Activated T-helper 2 cell treated with anti-CD3 and anti-CD28 coated beads, Interferon-gamma antibody, Interleukin-2, Interleukin-4, amounts not matched to agents 10 μg/mL and 5 μg/mL and 100 μg/mL, durations not matched to agents 14 hours and 24 hours and 36 hours (primary cell): ENCODE measurements at regions of chr1 and their contacts with region 1.

Region 1: GRCh38 chr1:11059990-11060830 is at the start of gene SRM:
- DNase-seq: peak; percentile 91
- H3K4me3 Mint-ChIP-seq: peak within 1 kb of the TSS; percentile 97
- H3K27ac Mint-ChIP-seq: peak within 1 kb of the TSS; percentile 95
- H3K4me1 Mint-ChIP-seq: peaks cover 26% of the 10 kb centered on the region
- H3K27me3 Mint-ChIP-seq: no peaks in the 10 kb centered on the region
- total RNA-seq, gene SRM: 230 and 233 TPM in 2 replicates

Region 2: DNA sequence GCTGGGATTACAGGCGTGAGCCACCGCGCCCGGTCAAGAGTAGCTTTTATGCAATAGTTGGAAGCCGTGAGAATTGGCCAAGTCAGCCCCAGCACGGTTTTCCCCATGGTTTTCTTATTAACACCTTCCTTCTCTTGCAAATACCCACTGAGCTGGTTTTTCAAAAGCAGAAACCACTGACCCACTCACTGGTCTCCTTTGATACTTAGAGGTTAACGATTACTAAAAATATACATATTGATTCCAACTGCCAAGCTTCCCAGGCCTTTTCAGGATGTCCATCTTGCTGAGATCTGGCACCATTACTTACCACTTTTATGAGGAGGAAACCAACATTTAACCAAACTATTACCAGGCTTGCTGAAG is 73.7 kb before region 1 on chr1:
- intact Hi-C with region 1: no loop called
- DNase-seq: no peak
- H3K4me3 Mint-ChIP-seq: no peak overlapping the region
- H3K27ac Mint-ChIP-seq: no peak overlapping the region
- H3K4me1 Mint-ChIP-seq: peaks cover 14% of the 10 kb centered on the region
- H3K27me3 Mint-ChIP-seq: peaks cover 12% of the 10 kb centered on the region

Region 3: GRCh38 chr1:11012250-11013171 is 47.7 kb before region 1 on chr1 and contains the start of gene TARDBP:
- intact Hi-C with region 1: loop called (anchors 10 kb)
- DNase-seq: peak; percentile 89
- H3K4me3 Mint-ChIP-seq: peak within 1 kb of the TSS; percentile 94
- H3K27ac Mint-ChIP-seq: peak within 1 kb of the TSS; percentile 98
- H3K4me1 Mint-ChIP-seq: peaks cover 19% of the 10 kb centered on the region
- H3K27me3 Mint-ChIP-seq: no peaks in the 10 kb centered on the region
- total RNA-seq, gene TARDBP: 190 and 202 TPM in 2 replicates

Region 4: DNA sequence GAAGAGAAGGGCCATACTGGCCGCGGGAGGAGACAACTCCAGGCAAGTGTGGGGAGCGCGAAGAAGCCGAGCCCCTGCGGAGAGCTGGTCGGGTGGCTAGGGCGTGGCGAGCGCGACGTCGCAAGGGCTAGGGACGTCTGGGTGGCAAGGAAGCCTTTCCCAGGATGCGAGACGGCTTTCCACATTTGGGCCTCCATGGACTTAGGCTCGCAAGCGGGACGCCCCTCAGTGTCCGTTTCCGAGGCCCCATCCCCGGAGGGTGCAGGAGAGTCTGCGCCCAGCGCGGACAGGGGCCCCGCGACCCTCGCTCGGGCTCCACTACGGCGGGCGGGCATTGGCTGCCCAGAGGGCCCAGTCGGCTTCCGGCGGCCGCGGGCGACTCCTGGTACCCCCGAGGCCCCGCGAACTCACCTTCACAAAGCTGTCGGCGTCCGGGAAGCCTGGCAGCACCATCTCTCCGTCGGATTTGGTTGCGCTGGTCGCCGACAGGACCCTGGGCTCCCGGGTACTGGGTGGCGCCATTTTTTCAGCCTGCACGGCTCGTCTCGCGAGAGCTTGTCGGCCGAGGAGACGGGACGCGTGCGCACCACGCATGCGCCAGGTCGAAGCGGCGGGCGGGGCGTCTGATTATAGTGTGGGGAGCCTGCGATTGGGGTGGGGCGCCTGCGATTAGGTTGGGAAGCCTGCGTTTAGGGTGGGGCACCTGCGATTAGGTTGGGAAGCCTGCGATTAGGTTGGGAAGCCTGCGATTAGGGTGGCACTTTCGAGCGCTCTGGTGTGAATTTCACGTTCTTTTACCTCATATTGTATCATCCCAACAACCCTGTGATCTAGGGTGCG is 39.3 kb after region 1 on chr1 and contains the start of gene EXOSC10:
- intact Hi-C with region 1: loop called (anchors 1 kb)
- DNase-seq: peak; percentile 93
- H3K4me3 Mint-ChIP-seq: peak within 1 kb of the TSS; percentile 98
- H3K27ac Mint-ChIP-seq: peak within 1 kb of the TSS; percentile 95
- H3K4me1 Mint-ChIP-seq: peaks cover 14% of the 10 kb centered on the region
- H3K27me3 Mint-ChIP-seq: no peaks in the 10 kb centered on the region
- total RNA-seq, gene EXOSC10: 97.8 and 102 TPM in 2 replicates

Region 5: GRCh38 chr1:11262171-11263049 is 202.2 kb after region 1 on chr1 and contains the start of gene MTOR:
- intact Hi-C with region 1: loop called (anchors 5 kb)
- DNase-seq: peak; percentile 98
- H3K4me3 Mint-ChIP-seq: peak within 1 kb of the TSS; percentile 93
- H3K27ac Mint-ChIP-seq: peak within 1 kb of the TSS; percentile 85
- H3K4me1 Mint-ChIP-seq: peaks cover 11% of the 10 kb centered on the region
- H3K27me3 Mint-ChIP-seq: no peaks in the 10 kb centered on the region
- total RNA-seq, gene MTOR: 43.3 and 44.5 TPM in 2 replicates

Region 6: GRCh38 chr1:11388617-11389016 is 328.4 kb after region 1 on chr1:
- intact Hi-C with region 1: no loop called
- DNase-seq: no peak
- H3K4me3 Mint-ChIP-seq: no peak overlapping the region
- H3K27ac Mint-ChIP-seq: no peak overlapping the region
- H3K4me1 Mint-ChIP-seq: peaks cover 11% of the 10 kb centered on the region
- H3K27me3 Mint-ChIP-seq: peaks cover 22% of the 10 kb centered on the region